Mammary epithelial cell (primary cell): ENCODE measurements at regions of chr12 and their contacts with region 1.

Region 1: DNA sequence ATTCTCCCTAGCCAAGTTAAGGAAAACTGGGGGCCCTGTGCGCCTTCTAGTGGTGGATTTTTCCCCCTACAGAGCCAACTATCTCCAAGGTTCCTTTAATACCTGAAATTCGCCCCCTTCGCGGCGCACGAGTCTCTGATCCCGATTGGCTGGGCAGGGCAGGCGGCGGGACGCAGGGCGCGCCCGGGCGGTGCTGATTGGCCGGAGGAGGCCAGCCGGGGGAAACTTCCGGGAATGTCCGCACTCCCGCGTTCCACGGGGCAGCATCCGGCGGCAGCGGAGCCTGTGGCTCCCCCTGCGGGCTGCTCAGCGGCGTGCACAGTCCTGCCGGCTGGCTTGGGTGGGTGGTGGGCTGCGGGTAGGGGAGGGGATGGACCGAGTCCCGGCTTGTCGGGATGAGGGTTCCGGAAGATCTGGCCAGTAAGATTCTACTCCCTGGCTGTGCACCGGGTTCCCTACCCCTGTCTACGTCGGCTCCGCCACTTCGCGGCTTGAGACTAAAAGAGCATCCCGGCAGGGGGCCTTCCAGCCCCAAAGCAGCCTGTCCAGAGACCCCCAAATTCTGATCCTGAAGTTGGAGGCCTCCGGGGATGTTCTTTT is at the start of gene NABP2:
- DNase-seq: peak; percentile 98
- H3K4me3 ChIP-seq: peak within 1 kb of the TSS; percentile 69 to 72 (median 70)
- H3K27ac ChIP-seq: peak within 1 kb of the TSS; percentile 30
- H3K4me1 ChIP-seq: peaks cover 21% of the 10 kb centered on the region
- H3K27me3 ChIP-seq: no peaks in the 10 kb centered on the region
- CTCF ChIP-seq: peak; percentile 65 to 82
- total RNA-seq, gene NABP2: 18.3 to 37.5 TPM

Region 2: GRCh38 chr12:56041552-56042429 is 182.4 kb before region 1 on chr12 and contains the start of gene RPS26:
- CTCF ChIA-PET with region 1: no interaction called
- dilution Hi-C with region 1: no loop called
- in situ Hi-C with region 1: no loop called
- intact Hi-C with region 1: loop called (anchors 10 kb)
- DNase-seq: peak; percentile 99
- H3K4me3 ChIP-seq: peak within 1 kb of the TSS; percentile 78 to 91 (median 86)
- H3K27ac ChIP-seq: peak within 1 kb of the TSS; percentile 91
- H3K4me1 ChIP-seq: peaks cover 19% of the 10 kb centered on the region
- H3K27me3 ChIP-seq: no peaks in the 10 kb centered on the region
- CTCF ChIP-seq: peak; percentile 16 to 54
- total RNA-seq, gene RPS26: 46.4 to 331 TPM

Region 3: GRCh38 chr12:56206457-56207166 is 17.6 kb before region 1 on chr12:
- CTCF ChIA-PET with region 1: interaction called, 16 read pairs
- dilution Hi-C with region 1: no loop called
- in situ Hi-C with region 1: no loop called
- intact Hi-C with region 1: loop called (anchors 1 kb)
- DNase-seq: peak; percentile 50
- H3K4me3 ChIP-seq: no peak overlapping the region
- H3K27ac ChIP-seq: no peak overlapping the region
- H3K4me1 ChIP-seq: no peaks in the 10 kb centered on the region
- H3K27me3 ChIP-seq: no peaks in the 10 kb centered on the region
- CTCF ChIP-seq: peak; percentile 71

Region 4: DNA sequence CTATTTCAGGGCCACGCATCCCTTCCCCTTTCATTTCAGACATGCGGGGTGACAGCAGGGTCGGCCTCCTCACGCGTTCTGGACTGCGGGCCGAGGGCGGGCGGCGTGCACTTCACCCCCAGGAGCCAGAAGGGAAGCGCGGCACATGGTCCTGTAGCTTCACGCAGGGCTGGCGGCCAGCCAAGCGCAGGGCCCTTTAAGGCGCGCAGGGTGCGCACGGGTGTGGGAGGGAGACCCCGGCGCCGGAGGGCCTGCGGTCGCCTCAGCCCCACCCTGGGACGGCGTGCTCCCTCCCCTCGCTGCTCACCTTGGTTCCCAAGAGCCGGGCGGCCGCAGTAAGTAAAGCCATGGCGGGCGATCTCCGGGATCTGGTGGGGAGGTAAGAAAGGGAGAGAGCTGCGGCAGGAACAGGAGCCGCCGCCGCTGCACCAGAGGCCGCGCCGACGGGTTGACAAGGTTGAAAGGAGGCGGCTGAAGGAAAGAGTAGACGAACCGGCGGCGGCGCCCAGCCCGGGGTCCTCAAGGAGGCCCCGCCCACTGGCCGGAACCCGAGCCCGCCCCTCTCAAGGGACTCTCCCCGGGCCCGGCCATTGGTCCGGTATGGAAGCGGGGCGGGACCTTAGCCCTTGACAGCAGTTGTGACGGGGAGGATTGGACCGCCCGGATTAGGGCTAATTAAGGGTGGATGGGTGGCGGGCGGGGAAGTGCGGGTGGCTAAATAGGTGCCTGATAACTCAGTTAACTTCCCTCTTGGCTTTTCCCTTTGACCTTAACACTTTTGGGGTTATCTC is 75.8 kb after region 1 on chr12 and contains the start of gene CS:
- CTCF ChIA-PET with region 1: no interaction called
- dilution Hi-C with region 1: no loop called
- in situ Hi-C with region 1: no loop called
- intact Hi-C with region 1: no loop called
- DNase-seq: peak; percentile 98
- H3K4me3 ChIP-seq: peak within 1 kb of the TSS; percentile 82 to 99 (median 93)
- H3K27ac ChIP-seq: peak within 1 kb of the TSS; percentile 88
- H3K4me1 ChIP-seq: peaks cover 13% of the 10 kb centered on the region
- H3K27me3 ChIP-seq: no peaks in the 10 kb centered on the region
- CTCF ChIP-seq: no peak
- total RNA-seq, gene CS: 81.4 to 169 TPM